HepG2 (cell line): ENCODE measurements at regions of chr6 and their contacts with region 1.

Region 1: DNA sequence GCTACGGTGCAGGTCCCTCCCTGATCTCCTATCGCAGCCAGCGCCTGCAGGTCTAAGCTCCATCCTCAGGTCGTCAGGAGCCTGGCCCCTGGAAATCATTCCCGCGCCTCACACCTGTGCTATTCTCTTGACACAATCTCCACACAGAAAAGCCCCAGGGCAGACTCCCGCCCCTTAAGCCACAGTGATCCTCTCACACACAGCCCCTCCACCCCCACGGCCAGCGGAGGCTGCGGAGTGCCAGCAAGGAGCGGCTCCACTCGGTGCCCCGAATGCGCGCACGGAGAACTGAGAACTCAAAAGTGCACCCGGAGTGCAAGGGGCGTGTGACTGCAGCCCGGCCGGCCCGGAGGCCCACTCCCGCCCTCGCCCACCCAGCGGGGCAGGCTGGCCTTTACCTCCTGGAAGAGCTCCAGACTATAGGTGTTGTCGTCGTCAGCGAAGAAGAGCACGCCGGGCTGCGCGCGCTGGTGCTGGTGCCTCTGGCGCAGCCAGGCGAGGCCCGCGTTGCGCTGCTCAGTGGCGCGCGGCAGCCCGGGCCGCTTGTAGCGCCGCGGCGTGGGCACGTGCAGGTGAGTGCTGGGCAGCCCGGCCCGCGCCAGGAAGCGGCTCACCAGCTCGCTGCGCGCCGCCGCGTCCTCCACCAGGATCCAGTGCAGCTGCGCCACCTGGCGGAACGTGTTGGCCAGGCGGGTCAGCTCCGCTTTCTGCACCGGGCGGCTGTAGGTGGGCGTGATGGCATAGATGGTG is 1.2 kb downstream of the B3GAT2 start:
- DNase-seq: peak; percentile 64
- ATAC-seq: peak; percentile 97
- H3K4me3 ChIP-seq: peak overlapping the region; percentile 41 to 66 (median 53)
- H3K27ac ChIP-seq: no peak overlapping the region
- H3K4me1 ChIP-seq: peaks cover 12% of the 10 kb centered on the region
- H3K27me3 ChIP-seq: peaks cover 0 to 36% of the 10 kb centered on the region in 2 experiments; a peak in 4 of 5 replicates
- CTCF ChIP-seq: peak; percentile 94
- EP300 ChIP-seq: no peak
- POLR2A ChIP-seq: no peak
- RAD21 ChIP-seq: peak; percentile 90

Region 2: GRCh38 chr6:70456735-70457134 is 498.9 kb before region 1 on chr6:
- CTCF ChIA-PET with region 1: no interaction called
- POLR2A ChIA-PET with region 1: no interaction called
- in situ Hi-C with region 1: no loop called
- intact Hi-C with region 1: no loop called
- DNase-seq: no peak
- ATAC-seq: no peak
- H3K4me3 ChIP-seq: no peak overlapping the region
- H3K27ac ChIP-seq: no peak overlapping the region
- H3K4me1 ChIP-seq: no peaks in the 10 kb centered on the region
- H3K27me3 ChIP-seq: no peaks in the 10 kb centered on the region
- CTCF ChIP-seq: no peak
- EP300 ChIP-seq: no peak
- POLR2A ChIP-seq: no peak
- RAD21 ChIP-seq: no peak

Region 3: DNA sequence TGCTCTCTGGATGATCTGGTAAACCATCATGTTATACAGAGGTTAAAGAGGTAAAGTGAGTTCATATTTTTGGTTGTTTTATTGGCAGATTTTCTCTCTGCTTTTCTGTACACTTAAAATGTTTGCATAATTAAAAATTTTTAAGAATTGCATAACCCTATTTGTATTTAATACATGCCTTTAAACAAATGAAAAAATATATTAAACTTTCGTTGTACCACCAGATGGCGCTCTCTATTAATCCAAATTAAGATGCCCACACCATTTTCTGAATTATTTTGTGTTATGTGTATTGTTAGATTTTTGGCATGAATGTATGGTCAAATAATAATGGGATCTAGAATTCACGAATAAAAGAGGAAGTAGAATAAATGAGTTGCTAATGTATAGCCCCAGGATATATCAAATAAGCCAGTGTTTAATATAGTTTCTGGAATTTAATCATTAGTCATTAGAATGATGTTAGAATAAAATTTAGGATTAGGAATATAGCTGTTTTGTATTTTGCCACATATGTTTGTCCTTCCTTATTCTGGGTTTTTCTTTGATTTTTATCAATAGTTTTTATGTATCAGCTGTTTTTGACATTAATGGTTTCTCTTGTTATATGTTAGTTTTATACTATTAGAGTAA is 249.0 kb before region 1 on chr6:
- CTCF ChIA-PET with region 1: interaction called, 10 read pairs
- POLR2A ChIA-PET with region 1: no interaction called
- in situ Hi-C with region 1: loop called (anchors 10 kb)
- intact Hi-C with region 1: loop called (anchors 1 kb)
- DNase-seq: peak; percentile 20
- ATAC-seq: no peak
- H3K4me3 ChIP-seq: no peak overlapping the region
- H3K27ac ChIP-seq: no peak overlapping the region
- H3K4me1 ChIP-seq: no peaks in the 10 kb centered on the region
- H3K27me3 ChIP-seq: no peaks in the 10 kb centered on the region
- CTCF ChIP-seq: peak; percentile 53
- EP300 ChIP-seq: no peak
- POLR2A ChIP-seq: no peak
- RAD21 ChIP-seq: peak; percentile 45; the same call in 1 of the 2 replicates

Region 4: DNA sequence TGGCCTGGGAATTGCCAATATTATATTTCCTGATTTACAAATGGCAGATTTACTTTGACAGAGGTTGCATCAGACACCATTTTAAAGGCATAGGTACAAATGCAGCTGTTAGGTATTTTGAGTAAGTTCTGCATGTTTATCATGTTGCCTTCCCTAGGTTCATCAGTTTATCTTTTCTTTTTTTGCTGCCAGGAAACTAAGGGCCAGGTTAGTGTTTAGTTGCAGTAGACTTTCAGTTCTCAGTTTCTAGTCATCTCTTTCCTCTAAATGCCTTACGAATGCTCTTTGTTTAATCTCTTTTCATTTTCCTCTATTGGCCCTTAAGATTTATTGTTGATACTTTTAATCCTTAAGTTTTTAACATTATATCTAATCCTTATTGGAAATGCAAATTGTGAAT is 158.0 kb before region 1 on chr6:
- CTCF ChIA-PET with region 1: no interaction called
- POLR2A ChIA-PET with region 1: no interaction called
- in situ Hi-C with region 1: no loop called
- intact Hi-C with region 1: loop called (anchors 10 kb)
- DNase-seq: no peak
- ATAC-seq: no peak
- H3K4me3 ChIP-seq: no peak overlapping the region
- H3K27ac ChIP-seq: no peak overlapping the region
- H3K4me1 ChIP-seq: no peaks in the 10 kb centered on the region
- H3K27me3 ChIP-seq: no peaks in the 10 kb centered on the region
- CTCF ChIP-seq: no peak
- EP300 ChIP-seq: no peak
- POLR2A ChIP-seq: no peak
- RAD21 ChIP-seq: no peak

Region 5: GRCh38 chr6:70933853-70934252 is 21.8 kb before region 1 on chr6:
- CTCF ChIA-PET with region 1: no interaction called
- POLR2A ChIA-PET with region 1: no interaction called
- in situ Hi-C with region 1: no loop called
- intact Hi-C with region 1: no loop called
- DNase-seq: no peak
- ATAC-seq: no peak
- H3K4me3 ChIP-seq: no peak overlapping the region
- H3K27ac ChIP-seq: no peak overlapping the region
- H3K4me1 ChIP-seq: no peaks in the 10 kb centered on the region
- H3K27me3 ChIP-seq: no peaks in the 10 kb centered on the region
- CTCF ChIP-seq: no peak
- EP300 ChIP-seq: no peak
- POLR2A ChIP-seq: no peak
- RAD21 ChIP-seq: no peak

Region 6: DNA sequence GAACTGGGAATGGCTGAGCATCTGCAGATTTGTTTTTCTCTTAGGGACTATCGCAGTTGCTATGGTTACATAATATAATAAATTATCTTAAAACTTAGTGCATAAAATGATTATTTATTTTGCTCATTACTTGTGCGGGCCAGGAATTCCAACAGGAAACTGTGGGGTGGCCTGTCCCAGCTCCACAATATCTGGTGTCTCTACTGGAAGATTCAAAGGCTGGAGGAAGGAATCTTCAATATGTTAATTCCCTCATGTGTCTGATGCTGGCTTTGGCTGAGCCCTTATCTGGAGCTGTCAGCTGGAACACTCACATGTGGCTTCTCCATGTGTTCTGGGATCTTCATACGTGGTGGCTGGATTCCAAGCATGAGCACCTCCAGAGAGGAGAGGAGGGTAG is 25.1 kb after region 1 on chr6:
- CTCF ChIA-PET with region 1: no interaction called
- POLR2A ChIA-PET with region 1: no interaction called
- in situ Hi-C with region 1: no loop called
- intact Hi-C with region 1: no loop called
- DNase-seq: no peak
- ATAC-seq: no peak
- H3K4me3 ChIP-seq: no peak overlapping the region
- H3K27ac ChIP-seq: no peak overlapping the region
- H3K4me1 ChIP-seq: no peaks in the 10 kb centered on the region
- H3K27me3 ChIP-seq: no peaks in the 10 kb centered on the region
- CTCF ChIP-seq: no peak
- EP300 ChIP-seq: no peak
- POLR2A ChIP-seq: no peak
- RAD21 ChIP-seq: no peak